Activated CD8-positive, alpha-beta T cell treated with anti-CD3 and anti-CD28 coated beads, Interleukin-2, amount 10 ng/mL, durations not matched to agents 7 days and 5 days (primary cell): ENCODE measurements at regions of chr1 and their contacts with region 1.

Region 1: DNA sequence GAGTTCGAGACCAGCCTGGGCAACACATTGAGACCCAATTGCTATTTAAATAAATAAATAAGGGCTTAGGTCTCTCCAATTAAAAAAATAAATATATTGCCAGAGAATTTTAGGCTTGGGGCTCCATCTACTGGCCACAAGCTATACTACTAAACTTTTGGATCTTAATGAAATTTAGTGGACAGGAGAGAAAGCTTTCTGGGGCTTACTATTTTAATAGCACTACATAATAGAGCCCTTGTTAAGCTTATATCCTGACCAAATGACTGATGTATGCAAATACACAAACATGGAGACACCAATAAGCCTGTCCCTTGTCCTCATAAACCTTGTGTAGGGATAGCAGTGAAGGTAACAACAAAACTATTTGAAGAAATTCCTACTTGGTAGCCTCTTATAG is 18.4 kb downstream of the CCT3 start:
- DNase-seq: peak; percentile 45
- ATAC-seq: no peak
- H3K4me3 Mint-ChIP-seq: no peak overlapping the region
- H3K27ac Mint-ChIP-seq: no peak overlapping the region
- H3K4me1 Mint-ChIP-seq: no peaks in the 10 kb centered on the region
- H3K27me3 Mint-ChIP-seq: no peaks in the 10 kb centered on the region

Region 2: DNA sequence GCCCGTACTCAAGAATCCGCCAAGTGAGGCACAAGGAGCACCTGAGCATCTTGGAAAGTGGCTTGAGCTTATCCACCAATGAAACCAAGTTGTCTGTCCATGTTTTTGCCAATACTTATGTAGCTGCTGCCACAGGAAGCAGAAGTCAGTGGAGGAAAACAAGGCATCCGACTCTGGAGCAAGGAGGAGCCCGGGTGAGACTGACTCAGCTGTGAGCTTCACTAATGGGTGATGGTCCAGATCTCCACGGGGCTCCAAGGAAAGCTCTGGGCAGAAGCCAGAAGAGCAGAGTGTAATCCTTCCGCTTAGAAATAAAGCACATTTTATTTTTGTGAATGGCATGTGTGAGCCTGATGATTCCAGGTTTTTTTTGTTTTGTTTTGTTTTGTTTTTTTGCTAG is 286.7 kb before region 1 on chr1:
- CTCF ChIA-PET with region 1: no interaction called
- POLR2A ChIA-PET with region 1: no interaction called
- DNase-seq: no peak
- ATAC-seq: no peak
- H3K4me3 Mint-ChIP-seq: no peak overlapping the region
- H3K27ac Mint-ChIP-seq: no peak overlapping the region
- H3K4me1 Mint-ChIP-seq: peaks cover 3% of the 10 kb centered on the region
- H3K27me3 Mint-ChIP-seq: no peaks in the 10 kb centered on the region

Region 3: DNA sequence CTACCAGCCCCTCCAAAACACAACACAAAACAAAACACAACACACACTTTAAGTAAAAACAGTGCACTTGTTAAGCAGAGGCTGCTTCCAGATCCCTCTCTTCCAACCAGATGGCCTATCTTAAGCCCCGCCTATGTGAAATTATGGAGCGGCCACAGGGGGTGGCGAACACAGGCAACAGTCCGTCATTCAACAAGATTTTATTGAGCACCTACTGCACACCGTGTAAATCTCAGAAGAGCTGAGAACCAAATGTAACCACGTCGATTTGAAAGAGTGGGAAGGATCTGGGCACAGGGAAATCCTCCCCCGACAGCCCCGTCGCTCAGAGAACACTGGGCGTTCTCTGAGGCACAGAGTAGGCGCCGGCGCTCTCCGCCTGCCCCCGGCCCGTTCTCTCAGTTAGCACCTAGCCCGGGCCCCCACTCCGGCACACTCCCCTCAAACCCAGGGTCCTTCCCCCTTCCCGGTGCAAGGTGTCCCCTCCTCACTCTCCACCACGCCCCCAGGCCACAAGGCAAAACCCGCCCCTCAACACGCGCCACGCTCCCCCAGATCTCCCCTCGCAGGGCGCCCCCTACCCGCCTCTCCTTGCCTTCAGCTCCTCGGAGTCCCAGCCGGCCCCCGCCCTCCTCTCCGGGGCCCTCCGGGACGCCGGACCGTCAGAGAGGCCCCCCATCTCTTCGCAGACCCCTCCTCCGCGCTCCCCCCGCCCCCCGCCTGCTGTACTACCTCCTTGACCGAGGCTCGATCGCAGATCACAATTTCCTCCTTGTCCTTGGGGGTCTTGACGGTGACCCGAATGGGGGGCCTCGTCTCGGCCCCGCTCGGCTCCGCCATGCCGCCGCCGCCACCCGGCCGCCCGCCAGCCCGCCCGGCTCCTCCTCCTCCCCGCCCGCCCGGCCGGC is 266.5 kb before region 1 on chr1:
- CTCF ChIA-PET with region 1: no interaction called
- POLR2A ChIA-PET with region 1: no interaction called
- DNase-seq: peak; percentile 75
- ATAC-seq: peak; percentile 41
- H3K4me3 Mint-ChIP-seq: peak overlapping the region; percentile 91
- H3K27ac Mint-ChIP-seq: peak overlapping the region; percentile 80
- H3K4me1 Mint-ChIP-seq: peaks cover 23% of the 10 kb centered on the region
- H3K27me3 Mint-ChIP-seq: no peaks in the 10 kb centered on the region

Region 4: GRCh38 chr1:156129706-156130581 is 189.7 kb before region 1 on chr1:
- CTCF ChIA-PET with region 1: interaction called, 15 read pairs
- POLR2A ChIA-PET with region 1: no interaction called
- DNase-seq: peak; percentile 83
- ATAC-seq: no peak
- H3K4me3 Mint-ChIP-seq: no peak overlapping the region
- H3K27ac Mint-ChIP-seq: no peak overlapping the region
- H3K4me1 Mint-ChIP-seq: peaks cover 51% of the 10 kb centered on the region
- H3K27me3 Mint-ChIP-seq: peaks cover 7% of the 10 kb centered on the region

Region 5: DNA sequence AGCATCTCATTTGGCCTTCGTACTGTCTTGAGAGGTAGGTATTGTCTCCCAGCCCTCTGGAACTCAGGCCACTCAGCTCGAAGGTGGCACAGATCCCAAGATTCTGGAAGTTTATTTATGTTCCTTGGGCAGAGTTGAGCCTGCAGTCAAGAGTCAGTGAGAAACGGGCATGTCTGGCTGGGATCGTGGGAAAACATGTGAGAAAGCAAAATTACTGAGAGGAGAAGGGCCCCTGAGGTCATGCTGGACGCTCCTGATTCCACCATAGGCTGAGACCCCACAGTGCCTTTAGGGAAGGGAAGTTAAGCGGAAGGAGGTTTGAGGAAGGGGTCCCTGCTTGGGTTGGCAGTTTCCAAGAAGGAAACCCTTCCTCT is 178.8 kb before region 1 on chr1:
- CTCF ChIA-PET with region 1: interaction called, 24 read pairs
- POLR2A ChIA-PET with region 1: no interaction called
- DNase-seq: no peak
- ATAC-seq: no peak
- H3K4me3 Mint-ChIP-seq: no peak overlapping the region
- H3K27ac Mint-ChIP-seq: no peak overlapping the region
- H3K4me1 Mint-ChIP-seq: peaks cover 5% of the 10 kb centered on the region
- H3K27me3 Mint-ChIP-seq: no peaks in the 10 kb centered on the region

Region 6: DNA sequence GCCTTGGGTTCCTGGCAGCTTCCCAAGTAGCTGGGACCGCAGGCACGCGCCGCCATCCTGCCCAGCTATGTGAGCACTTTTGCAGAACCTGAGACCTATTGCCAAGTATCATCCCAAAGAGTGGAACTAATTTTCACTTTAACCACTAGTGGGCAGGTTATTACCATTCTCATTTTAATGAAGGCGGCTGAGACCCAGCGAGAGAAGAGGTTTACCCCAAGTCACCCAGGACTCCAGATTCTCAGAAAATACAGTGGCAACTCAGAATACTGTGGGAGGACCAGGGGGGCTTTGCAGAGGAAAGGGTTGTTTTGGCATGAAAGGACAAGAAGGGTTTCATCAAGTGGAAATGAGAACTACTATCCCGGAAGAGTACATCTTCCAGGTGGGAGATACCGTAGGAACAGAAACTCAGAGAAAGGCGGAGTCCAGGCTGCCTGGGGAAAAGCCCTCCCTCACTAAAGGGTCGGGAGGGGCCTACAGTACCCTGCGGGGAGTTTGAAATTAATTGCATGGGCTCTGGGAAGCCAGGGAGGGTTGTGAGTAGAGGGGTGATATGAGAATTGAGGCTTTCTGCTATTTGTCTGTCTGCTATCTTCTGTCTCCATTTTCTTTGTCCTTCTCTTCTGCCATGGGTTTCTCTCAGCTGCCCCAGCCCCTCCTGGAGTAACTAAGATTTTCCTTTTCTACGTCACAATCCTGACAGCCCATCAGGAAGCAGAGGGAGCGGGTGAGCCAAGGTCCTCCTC is 173.5 kb before region 1 on chr1:
- CTCF ChIA-PET with region 1: interaction called, 24 read pairs
- POLR2A ChIA-PET with region 1: no interaction called
- DNase-seq: peak; percentile 72
- ATAC-seq: peak; percentile 80
- H3K4me3 Mint-ChIP-seq: peak overlapping the region; percentile 63
- H3K27ac Mint-ChIP-seq: peak overlapping the region; percentile 85
- H3K4me1 Mint-ChIP-seq: peaks cover 47% of the 10 kb centered on the region
- H3K27me3 Mint-ChIP-seq: no peaks in the 10 kb centered on the region

Region 7: GRCh38 chr1:156308078-156308477 is 11.6 kb before region 1 on chr1:
- CTCF ChIA-PET with region 1: interaction called, 13 read pairs
- POLR2A ChIA-PET with region 1: no interaction called
- DNase-seq: no peak
- ATAC-seq: no peak
- H3K4me3 Mint-ChIP-seq: no peak overlapping the region
- H3K27ac Mint-ChIP-seq: no peak overlapping the region
- H3K4me1 Mint-ChIP-seq: no peaks in the 10 kb centered on the region
- H3K27me3 Mint-ChIP-seq: no peaks in the 10 kb centered on the region

Region 8: GRCh38 chr1:156338180-156338973 is 18.7 kb after region 1 on chr1 and contains the starts of genes CCT3 and TSACC:
- CTCF ChIA-PET with region 1: interaction called, 21 read pairs
- POLR2A ChIA-PET with region 1: no interaction called
- DNase-seq: peak; percentile 99
- ATAC-seq: peak; percentile 96
- H3K4me3 Mint-ChIP-seq: peak within 1 kb of the TSS; percentile 97
- H3K27ac Mint-ChIP-seq: peak within 1 kb of the TSS; percentile 99
- H3K4me1 Mint-ChIP-seq: peaks cover 39% of the 10 kb centered on the region
- H3K27me3 Mint-ChIP-seq: peaks cover 2% of the 10 kb centered on the region
- total RNA-seq, gene CCT3: 266 to 269 TPM
- total RNA-seq, gene TSACC: 0.73 to 0.76 TPM

Region 9: GRCh38 chr1:156371553-156372264 is 52.0 kb after region 1 on chr1:
- CTCF ChIA-PET with region 1: no interaction called
- POLR2A ChIA-PET with region 1: no interaction called
- DNase-seq: no peak
- ATAC-seq: no peak
- H3K4me3 Mint-ChIP-seq: no peak overlapping the region
- H3K27ac Mint-ChIP-seq: no peak overlapping the region
- H3K4me1 Mint-ChIP-seq: peaks cover 4% of the 10 kb centered on the region
- H3K27me3 Mint-ChIP-seq: peaks cover 48% of the 10 kb centered on the region